GM12878 (cell line): ENCODE measurements at regions of chr18 and their contacts with region 1.

Region 1: GRCh38 chr18:23231340-23232021 is 96.2 kb downstream of the CABLES1 start:
- DNase-seq: peak; percentile 99
- ATAC-seq: peak; percentile 81
- H3K4me3 ChIP-seq: no peak overlapping the region
- H3K27ac ChIP-seq: peak overlapping the region; percentile 95
- H3K4me1 ChIP-seq: peaks cover 55% of the 10 kb centered on the region
- H3K27me3 ChIP-seq: no peaks in the 10 kb centered on the region
- CTCF ChIP-seq: no peak
- EP300 ChIP-seq: peak; percentile 100
- POLR2A ChIP-seq: peak; percentile 51
- RAD21 ChIP-seq: no peak; the same call in 1 of the 2 replicates

Region 2: GRCh38 chr18:23183411-23184155 is 47.9 kb before region 1 on chr18:
- CTCF ChIA-PET with region 1: no interaction called
- POLR2A ChIA-PET with region 1: interaction called, 3 read pairs
- RAD21 ChIA-PET with region 1: interaction called, 3 read pairs
- SMC1A ChIA-PET with region 1: interaction called, 15 read pairs
- in situ Hi-C with region 1: no loop called
- intact Hi-C with region 1: no loop called
- DNase-seq: no peak
- ATAC-seq: no peak
- H3K4me3 ChIP-seq: no peak overlapping the region
- H3K27ac ChIP-seq: no peak overlapping the region
- H3K4me1 ChIP-seq: no peaks in the 10 kb centered on the region
- H3K27me3 ChIP-seq: no peaks in the 10 kb centered on the region
- CTCF ChIP-seq: no peak
- EP300 ChIP-seq: no peak
- POLR2A ChIP-seq: no peak
- RAD21 ChIP-seq: no peak

Region 3: GRCh38 chr18:23243178-23243577 is 11.7 kb after region 1 on chr18:
- CTCF ChIA-PET with region 1: interaction called, 51 read pairs
- POLR2A ChIA-PET with region 1: interaction called, 58 read pairs
- RAD21 ChIA-PET with region 1: interaction called, 52 read pairs
- SMC1A ChIA-PET with region 1: interaction called, 52 read pairs
- in situ Hi-C with region 1: no loop called
- intact Hi-C with region 1: loop called (anchors 1 kb)
- DNase-seq: no peak
- ATAC-seq: no peak
- H3K4me3 ChIP-seq: no peak overlapping the region
- H3K27ac ChIP-seq: peak overlapping the region; percentile 30; the same call in 1 of the 2 replicates
- H3K4me1 ChIP-seq: peaks cover 38% of the 10 kb centered on the region
- H3K27me3 ChIP-seq: no peaks in the 10 kb centered on the region
- CTCF ChIP-seq: no peak; a peak in 1 of 6 replicates
- EP300 ChIP-seq: no peak
- POLR2A ChIP-seq: no peak
- RAD21 ChIP-seq: no peak

Region 4: DNA sequence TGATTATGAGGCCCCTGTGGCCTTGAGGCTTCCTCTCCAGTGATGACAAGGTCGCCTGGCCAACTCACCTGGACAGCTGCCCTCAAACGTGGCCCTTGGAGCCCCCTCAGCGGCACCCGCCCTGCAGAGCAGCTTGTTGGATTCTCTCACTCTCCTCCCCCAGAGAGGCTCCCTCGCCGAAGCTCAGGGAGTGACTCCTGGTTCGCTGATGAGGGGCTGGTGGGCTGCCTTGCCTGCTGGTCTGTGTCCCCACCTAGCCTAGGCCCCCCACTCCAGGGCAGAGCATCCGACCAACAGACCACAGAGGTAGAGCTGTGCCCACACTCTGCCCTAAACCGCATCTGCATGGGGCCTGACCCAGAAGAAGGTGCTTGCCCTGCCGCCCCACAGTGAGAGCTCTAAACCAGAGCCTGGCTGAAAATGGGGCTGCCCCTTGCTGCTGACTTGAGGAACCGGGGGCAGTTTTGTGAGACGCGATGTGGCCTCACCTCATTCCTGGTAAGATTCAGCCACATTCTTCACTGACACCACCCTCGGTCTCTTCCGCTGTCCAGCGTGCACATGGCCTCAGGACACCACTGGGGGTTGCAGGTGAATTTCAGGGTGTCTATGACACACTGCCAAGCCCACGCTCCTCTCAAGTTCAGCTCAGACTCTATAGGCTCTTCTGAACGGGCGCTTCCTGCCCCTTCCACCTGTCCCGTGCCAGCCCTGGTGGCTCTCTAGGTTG is 35.4 kb after region 1 on chr18:
- CTCF ChIA-PET with region 1: no interaction called
- POLR2A ChIA-PET with region 1: interaction called, 7 read pairs
- RAD21 ChIA-PET with region 1: interaction called, 7 read pairs
- SMC1A ChIA-PET with region 1: interaction called, 13 read pairs
- in situ Hi-C with region 1: no loop called
- intact Hi-C with region 1: no loop called
- DNase-seq: no peak
- ATAC-seq: peak; percentile 83
- H3K4me3 ChIP-seq: no peak overlapping the region
- H3K27ac ChIP-seq: peak overlapping the region; percentile 37; the same call in 1 of the 2 replicates
- H3K4me1 ChIP-seq: peaks cover 14% of the 10 kb centered on the region
- H3K27me3 ChIP-seq: no peaks in the 10 kb centered on the region
- CTCF ChIP-seq: no peak
- EP300 ChIP-seq: peak in 1 of 2 experiments; percentile 11; a peak in 2 of 4 replicates
- POLR2A ChIP-seq: no peak
- RAD21 ChIP-seq: no peak

Region 5: DNA sequence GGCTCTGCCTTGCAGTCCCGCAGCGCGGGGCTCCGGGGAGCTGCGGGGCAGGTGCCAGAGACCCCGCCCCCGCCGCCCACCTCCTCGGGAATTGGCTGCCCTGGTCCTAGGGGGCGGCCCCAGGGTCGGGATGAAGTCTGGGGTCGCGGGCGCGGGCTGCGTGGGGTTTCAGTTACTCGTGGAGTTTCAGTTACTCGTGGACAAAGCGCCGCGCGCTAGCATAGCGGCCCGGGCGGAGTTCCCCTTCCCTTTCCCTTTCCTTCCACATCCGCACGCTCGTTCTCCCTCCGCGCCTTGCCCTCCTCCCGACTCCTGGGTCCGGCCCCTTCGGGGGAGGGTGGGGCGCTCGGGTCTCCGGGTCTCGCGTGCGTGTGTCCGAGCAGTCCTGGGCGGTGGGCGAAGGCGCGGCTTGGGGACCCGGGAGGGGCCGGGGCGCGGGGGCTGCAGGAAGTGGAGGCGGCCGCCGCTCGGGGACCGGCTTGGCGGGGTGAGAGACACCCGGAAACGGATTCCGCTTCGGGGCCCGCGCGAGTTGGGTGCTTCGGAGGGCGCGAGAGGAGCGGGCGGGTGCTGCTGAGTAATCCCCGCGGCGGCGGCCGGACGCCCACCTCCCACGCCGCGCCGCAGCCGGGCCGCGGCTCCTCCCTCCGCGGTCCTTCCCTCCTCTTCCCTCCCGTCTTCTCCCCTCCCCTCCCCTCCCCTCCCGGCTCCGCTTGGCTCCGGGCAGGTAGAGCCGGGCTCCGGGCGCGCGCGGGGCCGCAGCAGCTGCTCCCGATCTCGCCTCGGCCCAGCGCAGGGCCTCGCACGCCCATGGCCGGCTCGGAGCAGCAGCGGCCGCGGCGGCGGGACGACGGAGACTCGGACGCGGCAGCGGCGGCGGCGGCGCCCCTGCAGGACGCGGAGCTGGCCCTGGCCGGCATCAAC is 782.8 kb after region 1 on chr18 and contains the start of gene TTC39C:
- CTCF ChIA-PET with region 1: no interaction called
- POLR2A ChIA-PET with region 1: no interaction called
- RAD21 ChIA-PET with region 1: no interaction called
- SMC1A ChIA-PET with region 1: no interaction called
- in situ Hi-C with region 1: no loop called
- intact Hi-C with region 1: loop called (anchors 10 kb)
- DNase-seq: no peak
- ATAC-seq: peak; percentile 66
- H3K4me3 ChIP-seq: peak within 1 kb of the TSS; percentile 88
- H3K27ac ChIP-seq: peak within 1 kb of the TSS; percentile 86
- H3K4me1 ChIP-seq: peaks cover 61% of the 10 kb centered on the region
- H3K27me3 ChIP-seq: no peaks in the 10 kb centered on the region
- CTCF ChIP-seq: no peak
- EP300 ChIP-seq: peak in 1 of 2 experiments; percentile 18; a peak in 1 of 4 replicates
- POLR2A ChIP-seq: peak; percentile 81
- RAD21 ChIP-seq: no peak
- polyA plus RNA-seq, gene TTC39C: 21.1 to 37.2 TPM